ENCODE measurements at regions of chr15 and their contacts with region 1.

Region 1: DNA sequence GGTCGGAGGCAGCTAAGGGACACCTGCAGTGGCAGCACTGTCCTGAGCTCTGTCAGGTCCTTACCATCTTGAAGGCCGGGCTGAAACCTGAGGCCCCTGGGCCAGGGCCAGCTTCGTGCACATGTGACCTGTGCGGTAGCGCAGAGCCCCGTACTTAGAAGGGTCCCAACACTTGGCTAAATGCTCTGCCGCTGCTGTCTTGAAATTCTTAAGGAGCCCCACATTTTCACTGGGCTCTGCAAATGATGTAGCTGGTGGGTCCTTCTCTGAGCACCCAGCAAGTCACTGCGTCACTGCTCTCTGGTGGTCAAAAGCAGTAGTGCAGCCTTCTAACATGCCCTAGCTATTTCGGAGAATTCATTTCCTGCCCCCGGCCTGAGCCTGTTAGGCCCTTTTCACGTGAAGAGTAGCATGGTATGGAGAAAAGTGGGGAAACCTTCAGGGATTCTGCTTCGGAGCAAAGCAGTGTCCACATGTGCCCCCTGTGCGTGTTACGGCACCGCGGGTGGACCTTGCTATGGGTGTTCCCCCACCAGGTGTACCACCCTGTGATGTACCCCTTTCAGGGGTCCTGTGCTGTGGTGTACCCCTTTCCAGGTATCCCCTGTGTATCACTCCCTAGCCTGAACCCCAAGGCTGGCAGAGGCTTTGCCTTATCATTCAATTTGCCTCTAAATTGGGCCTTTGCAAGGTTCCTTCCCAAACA is 79.7 kb downstream of the TMEM266 start:
- DNase-seq: peak; percentile 90

Region 2: DNA sequence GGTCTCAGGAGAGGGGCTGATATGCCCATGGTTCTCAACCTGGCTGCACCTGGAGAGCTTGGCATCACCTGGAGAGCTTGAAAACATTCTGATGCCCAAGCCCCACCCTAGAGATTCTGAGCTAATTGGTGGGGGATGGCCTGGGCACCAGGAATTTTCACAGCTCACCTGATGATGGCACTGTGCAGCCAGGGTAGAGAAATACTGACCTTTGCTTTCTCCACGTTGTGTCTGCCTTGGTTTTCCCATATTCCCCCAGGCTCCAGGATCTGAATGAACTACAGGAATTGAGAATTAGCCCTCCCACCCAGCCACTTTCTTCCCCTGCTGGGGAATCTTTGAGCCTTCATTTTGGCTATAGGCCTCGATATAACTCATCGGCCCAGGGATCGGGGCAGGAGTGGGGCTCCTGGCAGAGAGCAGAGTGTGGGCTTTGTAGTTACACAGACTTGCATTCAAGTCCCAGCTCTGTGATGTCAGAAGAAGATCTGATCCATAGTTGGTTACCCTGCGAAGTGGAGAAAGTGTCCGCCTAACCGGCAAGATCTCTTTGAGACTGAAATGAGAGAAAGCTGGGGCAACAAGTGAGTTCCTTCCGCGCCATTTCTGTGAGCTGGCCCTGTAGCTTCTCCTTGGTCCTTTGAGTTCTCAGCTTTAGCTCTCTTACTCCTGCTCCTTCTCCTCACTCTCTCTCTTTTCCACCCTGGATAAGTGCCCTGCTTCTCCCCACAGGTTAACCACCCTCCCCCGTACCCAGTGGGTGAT is 329.4 kb before region 1 on chr15:
- CTCF ChIA-PET with region 1: interaction called, 15 read pairs
- POLR2A ChIA-PET with region 1: no interaction called
- DNase-seq: peak; percentile 40

Region 3: DNA sequence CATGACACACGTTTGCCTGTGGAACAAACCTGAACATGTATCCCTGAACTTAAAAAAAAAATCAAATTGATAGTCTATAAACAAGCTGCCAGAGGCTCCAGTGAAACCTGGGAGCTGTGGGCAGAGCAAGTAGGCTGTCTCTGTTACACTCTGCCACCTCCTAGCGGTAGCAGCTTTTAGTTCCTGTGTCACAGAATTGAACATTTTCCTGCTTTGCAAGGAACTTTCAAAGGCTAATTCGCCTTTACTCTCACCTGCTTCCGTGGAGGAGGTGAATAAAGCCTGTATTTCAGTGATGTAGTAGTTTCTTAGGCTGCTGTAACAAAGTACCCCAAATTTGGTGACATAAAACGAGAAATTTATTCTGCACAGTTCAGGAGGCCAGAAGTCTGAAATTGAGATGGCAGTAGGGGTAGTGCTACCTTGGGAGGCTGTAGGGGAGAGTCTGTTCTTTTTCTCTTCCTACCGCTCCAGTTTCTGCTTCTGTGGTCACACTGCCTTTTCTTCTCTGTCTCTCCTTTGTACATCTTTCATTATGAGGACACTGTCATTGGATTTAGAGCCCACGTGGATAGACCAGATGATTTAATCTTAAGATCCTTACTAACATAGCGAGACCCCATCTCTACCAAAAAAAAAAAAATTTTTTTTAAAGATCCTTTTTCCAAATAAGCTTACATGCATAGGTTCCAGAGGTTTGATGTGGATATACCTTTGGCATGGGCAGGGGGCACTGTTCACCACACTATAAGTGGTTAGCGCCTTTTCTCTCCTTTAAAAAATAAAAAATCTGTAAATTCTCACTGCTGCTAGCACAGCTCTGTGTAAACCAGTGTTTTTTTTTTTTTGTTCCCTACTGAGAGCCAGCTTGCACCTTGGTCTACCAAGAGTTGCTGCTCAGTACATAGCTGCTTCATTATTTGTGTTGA is 210.6 kb before region 1 on chr15:
- CTCF ChIA-PET with region 1: interaction called, 14 read pairs
- POLR2A ChIA-PET with region 1: no interaction called
- DNase-seq: peak; percentile 48

Region 4: GRCh38 chr15:76057332-76058000 is 82.1 kb before region 1 on chr15:
- CTCF ChIA-PET with region 1: interaction called, 132 read pairs
- POLR2A ChIA-PET with region 1: interaction called, 5 read pairs
- DNase-seq: peak; percentile 31

Region 5: GRCh38 chr15:76065267-76065666 is 74.3 kb before region 1 on chr15:
- CTCF ChIA-PET with region 1: interaction called, 132 read pairs
- POLR2A ChIA-PET with region 1: no interaction called
- DNase-seq: no peak

Region 6: GRCh38 chr15:76150971-76151598 is 11.6 kb after region 1 on chr15:
- CTCF ChIA-PET with region 1: interaction called, 60 read pairs
- POLR2A ChIA-PET with region 1: interaction called, 5 read pairs
- DNase-seq: peak; percentile 88

Measured in HEK293T (cell line).